CD4-positive, alpha-beta T cell (primary cell): ENCODE measurements at regions of chr15 and their contacts with region 1.

Region 1: DNA sequence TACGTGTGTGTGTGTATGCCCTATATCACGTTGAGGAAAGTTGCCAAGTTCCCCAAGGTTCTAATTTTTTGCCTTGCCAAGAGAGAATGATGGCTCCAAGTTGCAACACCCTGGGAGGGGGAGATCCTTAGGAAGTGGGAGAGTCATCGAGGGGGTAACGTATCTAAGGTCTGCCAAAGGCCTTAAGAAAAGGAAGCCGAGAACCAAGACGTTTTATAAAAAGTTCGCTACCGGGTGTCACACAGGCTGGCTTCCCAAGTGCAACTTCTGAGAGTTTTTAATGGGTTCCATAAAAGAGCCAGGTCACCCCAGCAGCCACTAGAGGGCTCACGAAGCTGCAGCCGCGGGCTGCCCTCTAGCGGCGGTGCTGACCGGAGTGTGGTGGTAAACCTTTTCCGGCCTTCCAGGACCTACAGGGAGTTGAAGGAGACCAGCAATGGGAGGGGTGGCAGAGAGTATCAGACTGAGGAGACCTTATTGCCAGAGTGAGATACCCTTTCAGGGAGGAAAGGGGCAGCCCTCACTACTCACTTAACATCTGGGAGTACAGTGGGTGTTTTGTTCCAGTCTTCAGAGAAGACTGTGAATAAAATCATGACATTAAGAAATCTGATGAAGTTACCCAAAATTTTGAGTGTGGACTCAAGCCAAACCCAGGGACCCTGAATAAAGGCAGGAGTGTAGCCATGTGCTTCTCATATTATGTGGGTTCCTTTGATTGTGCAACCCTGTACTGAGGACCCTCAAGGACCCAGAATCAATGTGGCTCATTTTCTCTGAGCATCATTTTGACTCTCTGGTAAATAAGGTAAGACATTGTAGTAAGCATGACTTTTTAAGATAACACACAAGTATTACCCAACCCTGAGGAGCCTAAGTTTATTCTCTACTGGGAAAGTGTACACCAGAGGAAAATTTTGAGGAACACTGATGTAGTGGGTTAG is 2.5 kb upstream of the RFX7 start:
- DNase-seq: peak; percentile 77 to 92 (median 83)
- ATAC-seq: peak; percentile 75
- H3K4me3 ChIP-seq: peak overlapping the region; percentile 73
- H3K4me3 Mint-ChIP-seq: peak overlapping the region; percentile 98
- H3K27ac ChIP-seq: peak overlapping the region; percentile 8 to 46
- H3K27ac Mint-ChIP-seq: peak overlapping the region; percentile 90
- H3K4me1 ChIP-seq: peaks cover 21% of the 10 kb centered on the region
- H3K4me1 Mint-ChIP-seq: peaks cover 37% of the 10 kb centered on the region
- H3K27me3 ChIP-seq: no peaks in the 10 kb centered on the region
- H3K27me3 Mint-ChIP-seq: no peaks in the 10 kb centered on the region
- CTCF ChIP-seq: peak; percentile 100

Region 2: DNA sequence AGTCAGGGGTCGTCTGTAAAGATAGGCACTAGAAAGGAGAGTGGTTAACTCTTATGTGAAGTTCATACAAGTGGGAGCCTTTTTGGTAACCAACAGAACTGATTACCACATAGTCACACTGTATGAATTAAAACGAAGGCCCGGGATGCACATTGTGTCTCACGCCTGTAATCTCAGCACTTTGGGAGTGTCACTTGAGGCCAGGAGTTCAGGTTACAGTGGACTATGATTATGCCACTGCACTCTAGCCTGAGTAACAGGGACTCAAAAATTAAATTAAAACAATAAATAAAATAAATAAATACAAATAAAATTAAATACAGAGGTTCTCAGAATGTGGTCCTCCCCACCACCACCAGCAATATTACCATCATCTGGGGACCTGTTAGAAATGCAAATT is 738.6 kb before region 1 on chr15:
- CTCF ChIA-PET with region 1: no interaction called
- POLR2A ChIA-PET with region 1: no interaction called
- intact Hi-C with region 1: loop called in 1 of 2 experiments (anchors 10 kb)
- DNase-seq: no peak
- ATAC-seq: no peak
- H3K4me3 ChIP-seq: no peak overlapping the region
- H3K4me3 Mint-ChIP-seq: no peak overlapping the region
- H3K27ac ChIP-seq: no peak overlapping the region
- H3K27ac Mint-ChIP-seq: no peak overlapping the region
- H3K4me1 ChIP-seq: no peaks in the 10 kb centered on the region
- H3K4me1 Mint-ChIP-seq: no peaks in the 10 kb centered on the region
- H3K27me3 ChIP-seq: no peaks in the 10 kb centered on the region
- H3K27me3 Mint-ChIP-seq: peaks cover 16% of the 10 kb centered on the region
- CTCF ChIP-seq: no peak

Region 3: GRCh38 chr15:55993111-55993803 is 252.9 kb before region 1 on chr15 and contains the start of gene NEDD4:
- CTCF ChIA-PET with region 1: no interaction called
- POLR2A ChIA-PET with region 1: no interaction called
- intact Hi-C with region 1: loop called in 1 of 2 experiments (anchors 5 kb)
- DNase-seq: peak; percentile 37 to 89 (median 62)
- ATAC-seq: peak; percentile 90
- H3K4me3 ChIP-seq: peak within 1 kb of the TSS; percentile 86
- H3K4me3 Mint-ChIP-seq: peak within 1 kb of the TSS; percentile 96
- H3K27ac ChIP-seq: no peak within 1 kb of the TSS
- H3K27ac Mint-ChIP-seq: peak within 1 kb of the TSS; percentile 21
- H3K4me1 ChIP-seq: peaks cover 9% of the 10 kb centered on the region
- H3K4me1 Mint-ChIP-seq: peaks cover 22% of the 10 kb centered on the region
- H3K27me3 ChIP-seq: peaks cover 0 to 5% of the 10 kb centered on the region in 2 experiments
- H3K27me3 Mint-ChIP-seq: peaks cover 3% of the 10 kb centered on the region
- CTCF ChIP-seq: peak; percentile 17
- total RNA-seq, gene NEDD4: 2.6 to 2.7 TPM

Region 4: DNA sequence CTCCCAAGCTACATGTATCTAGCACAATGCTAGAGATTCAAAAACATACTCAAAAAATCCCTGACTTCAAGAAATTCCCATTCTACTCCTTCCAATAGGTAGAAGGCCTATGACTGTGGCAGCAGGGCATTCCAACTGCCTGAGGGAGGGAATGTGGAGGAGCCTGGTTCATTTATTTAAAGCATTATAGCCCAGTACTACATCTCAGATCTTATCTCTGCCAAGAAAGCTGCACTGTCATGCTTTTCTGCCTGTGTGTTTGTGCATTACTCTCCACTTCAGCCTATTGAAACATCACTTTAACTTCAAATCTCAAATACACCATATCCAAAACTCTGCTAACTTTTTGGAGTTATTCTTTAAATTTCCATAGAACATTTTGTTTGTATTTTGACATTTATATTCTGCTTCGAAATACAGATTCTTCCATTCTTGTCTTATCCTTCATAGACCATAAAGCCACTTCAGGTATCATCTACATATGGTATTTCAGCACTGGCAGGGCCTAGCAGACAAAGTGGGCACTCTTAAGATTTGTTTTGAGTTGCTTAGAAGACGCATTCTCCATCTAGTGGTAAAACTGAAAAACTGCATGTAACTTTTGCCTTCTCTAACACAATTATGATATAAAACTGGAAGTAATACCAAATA is 193.6 kb before region 1 on chr15:
- CTCF ChIA-PET with region 1: no interaction called
- POLR2A ChIA-PET with region 1: no interaction called
- intact Hi-C with region 1: loop called in 1 of 2 experiments (anchors 10 kb)
- DNase-seq: peak in 4 of 14 experiments; percentile 13 to 68 (median 58)
- ATAC-seq: peak; percentile 79
- H3K4me3 ChIP-seq: no peak overlapping the region
- H3K4me3 Mint-ChIP-seq: no peak overlapping the region
- H3K27ac ChIP-seq: no peak overlapping the region
- H3K27ac Mint-ChIP-seq: no peak overlapping the region
- H3K4me1 ChIP-seq: no peaks in the 10 kb centered on the region
- H3K4me1 Mint-ChIP-seq: no peaks in the 10 kb centered on the region
- H3K27me3 ChIP-seq: no peaks in the 10 kb centered on the region
- H3K27me3 Mint-ChIP-seq: no peaks in the 10 kb centered on the region
- CTCF ChIP-seq: peak; percentile 76

Region 5: DNA sequence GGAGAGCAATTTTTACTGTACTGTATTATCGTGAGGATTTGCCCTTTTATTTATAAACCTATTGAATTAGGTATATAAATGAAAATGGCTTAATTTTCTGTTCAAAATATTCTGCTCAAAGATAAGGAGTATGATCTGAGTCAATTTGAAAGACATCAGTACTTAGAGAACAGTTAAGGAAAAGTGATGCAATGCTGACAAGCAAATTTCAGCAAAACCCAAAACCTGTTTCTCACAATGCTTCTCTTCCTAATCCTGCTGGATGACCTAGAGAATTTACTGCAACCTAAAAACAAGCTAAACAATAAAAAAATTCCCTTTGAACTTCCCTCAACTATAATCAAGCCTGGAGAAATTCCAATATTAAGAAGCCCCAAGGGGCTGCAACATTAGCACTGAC is 85.2 kb before region 1 on chr15:
- CTCF ChIA-PET with region 1: no interaction called
- POLR2A ChIA-PET with region 1: no interaction called
- intact Hi-C with region 1: no loop called
- DNase-seq: no peak
- ATAC-seq: no peak
- H3K4me3 ChIP-seq: no peak overlapping the region
- H3K4me3 Mint-ChIP-seq: no peak overlapping the region
- H3K27ac ChIP-seq: no peak overlapping the region
- H3K27ac Mint-ChIP-seq: peak overlapping the region; percentile 18
- H3K4me1 ChIP-seq: peaks cover 7% of the 10 kb centered on the region
- H3K4me1 Mint-ChIP-seq: peaks cover 65% of the 10 kb centered on the region
- H3K27me3 ChIP-seq: no peaks in the 10 kb centered on the region
- H3K27me3 Mint-ChIP-seq: no peaks in the 10 kb centered on the region
- CTCF ChIP-seq: no peak

Region 6: GRCh38 chr15:56207092-56207491 is 39.1 kb before region 1 on chr15:
- CTCF ChIA-PET with region 1: no interaction called
- POLR2A ChIA-PET with region 1: interaction called, 5 read pairs
- intact Hi-C with region 1: loop called in 1 of 2 experiments (anchors 5 kb)
- DNase-seq: peak in 2 of 14 experiments; percentile 6 to 41
- ATAC-seq: peak; percentile 58
- H3K4me3 ChIP-seq: no peak overlapping the region
- H3K4me3 Mint-ChIP-seq: peak overlapping the region; percentile 5
- H3K27ac ChIP-seq: peak overlapping the region in 1 of 2 donors; percentile 63
- H3K27ac Mint-ChIP-seq: peak overlapping the region; percentile 88
- H3K4me1 ChIP-seq: peaks cover 7% of the 10 kb centered on the region
- H3K4me1 Mint-ChIP-seq: peaks cover 93% of the 10 kb centered on the region
- H3K27me3 ChIP-seq: no peaks in the 10 kb centered on the region
- H3K27me3 Mint-ChIP-seq: no peaks in the 10 kb centered on the region
- CTCF ChIP-seq: no peak

Region 7: GRCh38 chr15:56491110-56491722 is 245.1 kb after region 1 on chr15:
- CTCF ChIA-PET with region 1: no interaction called
- POLR2A ChIA-PET with region 1: no interaction called
- intact Hi-C with region 1: no loop called
- DNase-seq: peak; percentile 10 to 71 (median 29)
- ATAC-seq: peak; percentile 48
- H3K4me3 ChIP-seq: no peak overlapping the region
- H3K4me3 Mint-ChIP-seq: no peak overlapping the region
- H3K27ac ChIP-seq: no peak overlapping the region
- H3K27ac Mint-ChIP-seq: no peak overlapping the region
- H3K4me1 ChIP-seq: no peaks in the 10 kb centered on the region
- H3K4me1 Mint-ChIP-seq: no peaks in the 10 kb centered on the region
- H3K27me3 ChIP-seq: peaks cover 0 to 3% of the 10 kb centered on the region in 2 experiments
- H3K27me3 Mint-ChIP-seq: no peaks in the 10 kb centered on the region
- CTCF ChIP-seq: peak; percentile 69

Region 8: GRCh38 chr15:56918046-56918938 is 672.1 kb after region 1 on chr15 and contains the start of gene TCF12:
- CTCF ChIA-PET with region 1: no interaction called
- POLR2A ChIA-PET with region 1: no interaction called
- intact Hi-C with region 1: loop called in 1 of 2 experiments (anchors 10 kb)
- DNase-seq: peak; percentile 78 to 95 (median 84)
- ATAC-seq: peak; percentile 75
- H3K4me3 ChIP-seq: peak within 1 kb of the TSS; percentile 82
- H3K4me3 Mint-ChIP-seq: peak within 1 kb of the TSS; percentile 95
- H3K27ac ChIP-seq: peak within 1 kb of the TSS; percentile 68 to 71
- H3K27ac Mint-ChIP-seq: peak within 1 kb of the TSS; percentile 91
- H3K4me1 ChIP-seq: peaks cover 28% of the 10 kb centered on the region
- H3K4me1 Mint-ChIP-seq: peaks cover 49% of the 10 kb centered on the region
- H3K27me3 ChIP-seq: no peaks in the 10 kb centered on the region
- H3K27me3 Mint-ChIP-seq: no peaks in the 10 kb centered on the region
- CTCF ChIP-seq: peak; percentile 56
- total RNA-seq, gene TCF12: 54.0 TPM